ENCODE measurements at regions of chr10 and their contacts with region 1.

Region 1: GRCh38 chr10:129658376-129659074 is 191.5 kb downstream of the MGMT start:
- DNase-seq: no peak
- H3K4me3 ChIP-seq: no peak overlapping the region
- H3K27ac ChIP-seq: no peak overlapping the region
- H3K4me1 ChIP-seq: peaks cover 0 to 8% (median 4%) of the 10 kb centered on the region in 4 experiments; a peak in 5 of 7 replicates
- H3K27me3 ChIP-seq: no peaks in the 10 kb centered on the region
- CTCF ChIP-seq: peak; percentile 71 to 91 (median 84)
- EP300 ChIP-seq: no peak
- POLR2A ChIP-seq: no peak
- RAD21 ChIP-seq: peak; percentile 71 to 82

Region 2: GRCh38 chr10:129514568-129515451 is 143.7 kb before region 1 on chr10:
- CTCF ChIA-PET with region 1: no interaction called
- POLR2A ChIA-PET with region 1: no interaction called
- DNase-seq: peak in 1 of 2 experiments; percentile 13
- H3K4me3 ChIP-seq: no peak overlapping the region
- H3K27ac ChIP-seq: no peak overlapping the region
- H3K4me1 ChIP-seq: no peaks in the 10 kb centered on the region
- H3K27me3 ChIP-seq: no peaks in the 10 kb centered on the region
- CTCF ChIP-seq: no peak
- EP300 ChIP-seq: no peak
- POLR2A ChIP-seq: no peak
- RAD21 ChIP-seq: no peak

Region 3: DNA sequence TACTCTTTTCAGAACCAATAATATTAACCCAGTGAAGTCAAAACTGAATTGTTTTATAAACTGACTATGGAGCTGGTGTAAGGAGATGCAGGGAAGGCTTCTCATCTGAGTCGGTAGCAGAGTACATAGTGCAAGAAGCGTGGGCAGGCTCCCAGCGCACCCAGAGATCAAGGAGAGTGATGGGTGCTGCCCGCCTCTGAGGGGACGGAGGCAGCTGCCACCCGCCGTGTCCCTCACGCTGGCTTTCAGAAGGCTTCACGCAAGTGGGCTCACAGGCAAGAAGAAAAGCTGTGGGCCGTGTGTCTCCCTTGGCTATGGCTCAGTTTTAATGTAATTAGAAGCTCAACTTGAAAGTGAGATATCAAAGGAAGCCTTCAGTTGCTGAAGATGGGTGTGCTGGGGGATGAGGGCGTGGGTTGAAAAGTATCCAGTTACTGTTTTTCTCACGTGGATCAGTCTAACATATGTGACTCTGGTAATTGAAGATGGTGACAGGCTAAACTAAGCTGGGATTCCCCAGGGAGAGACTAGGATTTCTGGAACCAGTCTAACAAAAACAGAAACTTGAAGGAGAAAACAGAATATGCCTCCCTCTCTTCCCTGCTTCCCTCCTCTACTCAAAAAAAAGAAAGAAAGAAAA is 31.6 kb before region 1 on chr10:
- CTCF ChIA-PET with region 1: interaction called, 17 read pairs
- POLR2A ChIA-PET with region 1: no interaction called
- DNase-seq: no peak
- H3K4me3 ChIP-seq: no peak overlapping the region
- H3K27ac ChIP-seq: no peak overlapping the region
- H3K4me1 ChIP-seq: peaks cover 0 to 8% (median 0%) of the 10 kb centered on the region in 4 experiments; a peak in 2 of 7 replicates
- H3K27me3 ChIP-seq: no peaks in the 10 kb centered on the region
- CTCF ChIP-seq: no peak
- EP300 ChIP-seq: no peak
- POLR2A ChIP-seq: no peak
- RAD21 ChIP-seq: no peak

Region 4: DNA sequence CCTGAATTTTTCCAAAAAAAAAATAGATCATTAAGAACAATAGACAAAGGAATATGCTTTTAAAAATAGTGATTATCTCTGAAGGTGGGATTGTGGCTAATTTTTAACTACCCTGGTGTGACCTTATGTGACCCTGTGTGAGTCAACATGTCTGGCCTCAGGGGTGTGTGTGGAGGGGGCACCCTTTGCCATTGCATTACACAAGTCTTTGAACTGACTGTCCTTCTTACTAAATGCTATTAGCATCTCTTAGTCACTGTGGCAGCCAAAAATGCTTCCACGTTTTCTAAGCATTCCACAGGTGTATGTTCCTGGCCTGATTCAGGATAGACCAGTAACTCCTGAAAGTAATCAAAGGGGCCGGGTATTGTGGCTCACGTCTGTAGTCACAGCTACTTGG is 16.1 kb before region 1 on chr10:
- CTCF ChIA-PET with region 1: interaction called, 38 read pairs
- POLR2A ChIA-PET with region 1: no interaction called
- DNase-seq: no peak
- H3K4me3 ChIP-seq: no peak overlapping the region
- H3K27ac ChIP-seq: no peak overlapping the region
- H3K4me1 ChIP-seq: peaks cover 0 to 1% (median 0%) of the 10 kb centered on the region in 4 experiments; a peak in 2 of 7 replicates
- H3K27me3 ChIP-seq: no peaks in the 10 kb centered on the region
- CTCF ChIP-seq: no peak
- EP300 ChIP-seq: no peak
- POLR2A ChIP-seq: no peak
- RAD21 ChIP-seq: no peak

Region 5: DNA sequence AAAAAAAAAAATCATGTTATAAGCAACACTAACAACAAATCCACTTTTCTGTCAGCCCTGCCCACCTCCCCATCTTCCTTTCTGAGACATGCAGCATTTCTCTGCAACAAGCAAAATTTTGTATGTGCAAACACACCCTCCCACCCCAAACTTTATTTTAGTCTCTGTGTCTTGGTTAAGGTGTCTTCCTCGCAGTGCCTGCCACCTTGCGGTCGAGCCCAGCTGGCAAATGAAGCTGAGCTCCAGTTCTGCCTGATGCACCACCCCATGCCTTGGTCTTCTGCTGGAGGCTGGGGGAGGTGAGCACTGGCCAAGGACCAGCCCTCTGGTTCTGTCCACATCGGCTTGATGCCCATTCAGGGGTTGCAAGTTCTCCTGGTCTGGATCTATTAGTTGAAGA is 14.8 kb after region 1 on chr10:
- CTCF ChIA-PET with region 1: interaction called, 32 read pairs
- POLR2A ChIA-PET with region 1: no interaction called
- DNase-seq: no peak
- H3K4me3 ChIP-seq: no peak overlapping the region
- H3K27ac ChIP-seq: no peak overlapping the region
- H3K4me1 ChIP-seq: no peaks in the 10 kb centered on the region
- H3K27me3 ChIP-seq: no peaks in the 10 kb centered on the region
- CTCF ChIP-seq: no peak
- EP300 ChIP-seq: no peak
- POLR2A ChIP-seq: no peak
- RAD21 ChIP-seq: peak; percentile 31 to 40; a peak in 3 of 4 replicates

Region 6: GRCh38 chr10:129685271-129685670 is 26.7 kb after region 1 on chr10:
- CTCF ChIA-PET with region 1: no interaction called
- POLR2A ChIA-PET with region 1: no interaction called
- DNase-seq: no peak
- H3K4me3 ChIP-seq: no peak overlapping the region
- H3K27ac ChIP-seq: no peak overlapping the region
- H3K4me1 ChIP-seq: no peaks in the 10 kb centered on the region
- H3K27me3 ChIP-seq: no peaks in the 10 kb centered on the region
- CTCF ChIP-seq: no peak
- EP300 ChIP-seq: no peak
- POLR2A ChIP-seq: no peak
- RAD21 ChIP-seq: no peak

Measured in H1 (cell line).